ENCODE measurements at regions of chr12 and their contacts with region 1.

Region 1: DNA sequence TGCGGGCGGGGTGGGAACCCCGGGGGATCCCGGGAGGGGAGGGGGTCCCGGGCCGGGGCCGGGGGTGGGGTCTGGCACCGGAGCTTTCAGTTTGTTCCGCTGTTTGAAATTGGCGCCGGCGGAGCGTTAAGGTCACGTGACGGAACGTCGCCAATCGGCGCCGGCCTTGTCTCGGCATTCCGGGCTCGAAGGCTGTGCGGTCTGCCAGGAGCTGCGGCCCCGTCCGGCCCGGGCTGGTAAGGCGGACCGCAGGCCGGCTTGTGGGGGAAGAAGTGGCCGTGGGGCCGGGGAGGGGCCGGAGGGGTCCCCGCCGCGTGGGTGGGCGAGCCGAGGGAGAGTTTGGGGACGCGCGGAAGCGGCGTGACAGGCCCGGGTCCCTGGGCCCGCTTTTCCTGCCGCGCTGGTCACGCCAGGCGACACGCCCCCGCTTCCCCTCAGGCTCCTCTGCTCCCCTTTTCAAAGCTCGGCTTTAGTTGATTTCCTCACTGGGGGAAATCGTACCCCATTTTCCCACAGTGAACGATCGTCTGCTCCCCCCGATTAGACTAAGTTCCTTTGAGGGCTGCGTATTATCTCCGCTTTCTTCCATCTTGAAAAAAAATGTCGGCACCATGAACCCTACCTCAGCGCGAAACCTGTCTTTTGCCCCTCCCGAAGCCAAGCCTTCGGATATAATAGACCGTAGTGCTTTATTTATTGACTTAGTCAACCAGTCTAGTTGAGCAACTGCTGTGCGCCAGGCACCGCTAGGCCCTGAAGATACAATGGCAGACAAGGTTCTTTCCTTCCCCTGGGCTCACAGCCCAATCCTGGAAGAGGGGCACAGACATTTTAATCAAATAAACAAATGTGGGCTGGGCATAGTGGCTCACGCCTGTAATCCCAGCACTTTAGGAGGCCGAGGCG is at the starts of genes FOXM1 and RHNO1:
- DNase-seq: peak; percentile 92
- H3K4me3 Mint-ChIP-seq: peak within 1 kb of the TSS; percentile 95
- H3K27ac Mint-ChIP-seq: peak within 1 kb of the TSS; percentile 97
- H3K4me1 Mint-ChIP-seq: peaks cover 38% of the 10 kb centered on the region
- H3K27me3 Mint-ChIP-seq: no peaks in the 10 kb centered on the region
- total RNA-seq, gene FOXM1: 79.3 to 80.0 TPM
- total RNA-seq, gene RHNO1: 68.0 to 80.2 TPM

Region 2: DNA sequence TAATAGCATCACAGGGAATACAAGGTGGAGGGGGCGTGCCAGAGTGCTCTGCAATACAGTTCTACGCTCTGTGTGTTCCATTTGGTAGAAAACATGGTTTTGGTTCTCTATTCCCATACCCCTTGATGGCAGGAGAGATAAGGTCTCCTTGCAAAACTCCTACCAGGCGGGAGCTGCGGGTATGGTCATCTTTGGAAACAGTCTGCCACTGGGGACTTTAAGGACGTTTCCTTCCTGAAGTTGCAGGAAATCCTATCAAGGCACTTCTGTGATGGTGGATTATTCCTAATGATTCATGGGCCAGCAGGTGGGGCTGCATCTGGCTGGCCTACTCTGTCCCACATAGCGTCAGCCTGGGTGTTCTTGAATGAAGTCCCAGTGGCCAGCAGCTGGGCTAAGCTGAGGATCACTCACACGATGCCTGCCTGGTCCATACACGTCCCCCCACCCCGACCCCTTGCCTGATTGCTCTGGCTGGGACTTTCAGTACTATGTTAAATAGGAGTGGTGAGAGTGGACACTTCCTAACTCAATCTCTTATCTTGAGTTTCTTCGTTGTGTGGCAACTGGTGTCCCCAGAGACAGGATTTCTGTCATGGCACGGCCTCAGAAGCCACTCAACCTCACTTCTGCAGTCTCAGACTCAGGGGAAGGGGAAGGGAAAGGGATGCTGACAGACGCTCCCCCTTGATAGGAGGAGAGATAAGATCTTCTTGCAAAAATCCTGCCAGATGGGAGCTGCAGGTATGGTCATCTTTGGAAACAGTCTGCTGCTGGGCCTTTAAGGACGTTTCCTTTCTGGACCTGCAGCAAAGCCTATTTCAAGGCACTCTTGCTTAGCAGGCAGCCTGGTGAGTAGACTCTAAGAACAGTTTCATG is 143.6 kb before region 1 on chr12:
- CTCF ChIA-PET with region 1: no interaction called
- POLR2A ChIA-PET with region 1: no interaction called
- intact Hi-C with region 1: no loop called
- DNase-seq: no peak
- H3K4me3 Mint-ChIP-seq: no peak overlapping the region
- H3K27ac Mint-ChIP-seq: no peak overlapping the region
- H3K4me1 Mint-ChIP-seq: no peaks in the 10 kb centered on the region
- H3K27me3 Mint-ChIP-seq: peaks cover 29% of the 10 kb centered on the region

Region 3: GRCh38 chr12:2794736-2795289 is 82.5 kb before region 1 on chr12 and contains the start of gene FKBP4:
- CTCF ChIA-PET with region 1: no interaction called
- POLR2A ChIA-PET with region 1: no interaction called
- intact Hi-C with region 1: loop called (anchors 2 kb)
- DNase-seq: peak; percentile 93
- H3K4me3 Mint-ChIP-seq: peak within 1 kb of the TSS; percentile 91
- H3K27ac Mint-ChIP-seq: peak within 1 kb of the TSS; percentile 23
- H3K4me1 Mint-ChIP-seq: peaks cover 22% of the 10 kb centered on the region
- H3K27me3 Mint-ChIP-seq: no peaks in the 10 kb centered on the region
- total RNA-seq, gene FKBP4: 144 to 153 TPM

Region 4: DNA sequence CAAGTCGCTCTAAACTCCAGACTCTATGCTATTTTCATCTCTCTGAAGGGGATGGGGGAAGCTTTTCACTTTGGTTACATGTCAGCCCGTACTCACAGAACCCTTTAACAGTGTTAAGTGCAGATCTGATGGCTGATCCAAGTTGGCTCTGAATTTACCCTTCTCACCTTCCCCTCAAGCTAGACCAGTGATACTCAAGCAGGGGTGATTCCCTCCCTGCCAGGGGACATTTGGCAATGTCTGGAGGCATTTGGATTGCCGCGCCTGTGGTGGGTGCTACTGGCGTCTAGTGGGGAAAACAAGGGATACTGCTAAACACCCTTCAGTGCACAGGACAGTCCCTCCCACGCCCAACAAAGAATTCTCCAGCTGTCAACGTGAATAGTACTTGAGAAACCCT is 14.4 kb before region 1 on chr12:
- CTCF ChIA-PET with region 1: no interaction called
- POLR2A ChIA-PET with region 1: interaction called, 26 read pairs
- intact Hi-C with region 1: loop called (anchors 1 kb)
- DNase-seq: no peak
- H3K4me3 Mint-ChIP-seq: no peak overlapping the region
- H3K27ac Mint-ChIP-seq: no peak overlapping the region
- H3K4me1 Mint-ChIP-seq: peaks cover 4% of the 10 kb centered on the region
- H3K27me3 Mint-ChIP-seq: no peaks in the 10 kb centered on the region

Region 5: DNA sequence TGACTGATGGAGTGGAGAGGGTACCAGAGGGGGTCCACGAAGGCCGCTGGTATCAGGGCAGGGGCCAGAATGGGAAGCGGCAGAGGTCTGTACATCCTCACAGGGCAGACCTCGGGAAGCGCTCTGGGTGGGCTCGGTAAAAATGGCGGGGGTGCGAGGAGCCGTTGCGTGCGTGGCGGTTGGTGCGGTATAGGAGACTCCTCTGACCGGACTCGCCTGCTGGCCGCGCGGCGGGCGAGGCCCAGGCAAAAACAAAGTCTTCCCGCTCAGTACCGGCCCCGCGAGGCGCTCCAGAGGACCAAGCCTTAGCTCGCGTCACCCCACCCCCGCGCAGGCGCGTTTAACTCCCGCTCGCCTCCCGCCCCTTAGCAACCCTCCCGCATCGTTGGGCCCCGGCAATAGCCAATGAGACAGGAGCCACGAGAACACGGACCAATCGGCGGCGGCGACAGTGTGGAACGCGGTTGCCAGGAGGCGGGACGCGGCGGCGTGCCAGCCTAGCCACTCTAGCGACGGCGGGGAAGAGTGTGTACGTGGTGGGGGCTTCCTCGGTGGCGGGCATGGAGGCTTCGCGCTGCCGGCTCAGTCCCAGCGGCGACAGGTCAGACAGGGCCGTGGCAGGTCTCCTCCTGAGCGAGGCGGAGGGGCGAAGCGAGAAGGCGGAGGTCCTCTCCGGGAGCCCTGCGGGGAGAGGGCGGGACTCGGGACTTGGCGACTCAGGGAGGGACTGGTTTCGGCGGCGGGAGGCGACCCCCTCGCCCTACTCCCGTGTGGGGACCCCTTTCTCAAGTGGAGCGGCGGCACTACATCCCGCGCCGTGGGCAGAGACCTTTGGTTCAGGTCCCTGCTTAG is 13.3 kb after region 1 on chr12 and contains the start of gene TULP3:
- CTCF ChIA-PET with region 1: interaction called, 10 read pairs
- POLR2A ChIA-PET with region 1: interaction called, 6 read pairs
- intact Hi-C with region 1: loop called (anchors 1 kb)
- DNase-seq: peak; percentile 99
- H3K4me3 Mint-ChIP-seq: peak within 1 kb of the TSS; percentile 80
- H3K27ac Mint-ChIP-seq: peak within 1 kb of the TSS; percentile 86
- H3K4me1 Mint-ChIP-seq: peaks cover 32% of the 10 kb centered on the region
- H3K27me3 Mint-ChIP-seq: no peaks in the 10 kb centered on the region
- total RNA-seq, gene TULP3: 5.5 to 6.5 TPM

Region 6: GRCh38 chr12:2900642-2901041 is 23.3 kb after region 1 on chr12:
- CTCF ChIA-PET with region 1: no interaction called
- POLR2A ChIA-PET with region 1: no interaction called
- intact Hi-C with region 1: no loop called
- DNase-seq: no peak
- H3K4me3 Mint-ChIP-seq: no peak overlapping the region
- H3K27ac Mint-ChIP-seq: no peak overlapping the region
- H3K4me1 Mint-ChIP-seq: no peaks in the 10 kb centered on the region
- H3K27me3 Mint-ChIP-seq: no peaks in the 10 kb centered on the region

Region 7: GRCh38 chr12:3752741-3753486 is 875.6 kb after region 1 on chr12 and contains the start of gene CRACR2A:
- CTCF ChIA-PET with region 1: no interaction called
- POLR2A ChIA-PET with region 1: no interaction called
- intact Hi-C with region 1: loop called (anchors 10 kb)
- DNase-seq: peak; percentile 89
- H3K4me3 Mint-ChIP-seq: peak within 1 kb of the TSS; percentile 89
- H3K27ac Mint-ChIP-seq: peak within 1 kb of the TSS; percentile 93
- H3K4me1 Mint-ChIP-seq: peaks cover 51% of the 10 kb centered on the region
- H3K27me3 Mint-ChIP-seq: no peaks in the 10 kb centered on the region
- total RNA-seq, gene CRACR2A: 15.8 to 19.1 TPM